ENCODE measurements at regions of chr3 and their contacts with region 1.

Region 1: GRCh38 chr3:149473357-149474249 is 894 bp upstream of the TM4SF4 start:
- DNase-seq: peak; percentile 71 to 90
- H3K4me3 ChIP-seq: no peak overlapping the region
- H3K27ac ChIP-seq: peak overlapping the region; percentile 58 to 73
- H3K4me1 ChIP-seq: peaks cover 0 to 71% (median 47%) of the 10 kb centered on the region in 4 donors
- H3K27me3 ChIP-seq: no peaks in the 10 kb centered on the region
- CTCF ChIP-seq: no peak

Region 2: GRCh38 chr3:149401215-149401925 is 72.2 kb before region 1 on chr3:
- intact Hi-C with region 1: loop called (anchors 5 kb)
- DNase-seq: no peak
- H3K4me3 ChIP-seq: no peak overlapping the region
- H3K27ac ChIP-seq: peak overlapping the region; percentile 74
- H3K4me1 ChIP-seq: peaks cover 0 to 46% (median 13%) of the 10 kb centered on the region in 4 donors
- H3K27me3 ChIP-seq: no peaks in the 10 kb centered on the region
- CTCF ChIP-seq: no peak

Measured in tibial artery (tissue), 4 donors.